Uterus (tissue), 4 donors: ENCODE measurements at regions of chr3 and their contacts with region 1.

Region 1: DNA sequence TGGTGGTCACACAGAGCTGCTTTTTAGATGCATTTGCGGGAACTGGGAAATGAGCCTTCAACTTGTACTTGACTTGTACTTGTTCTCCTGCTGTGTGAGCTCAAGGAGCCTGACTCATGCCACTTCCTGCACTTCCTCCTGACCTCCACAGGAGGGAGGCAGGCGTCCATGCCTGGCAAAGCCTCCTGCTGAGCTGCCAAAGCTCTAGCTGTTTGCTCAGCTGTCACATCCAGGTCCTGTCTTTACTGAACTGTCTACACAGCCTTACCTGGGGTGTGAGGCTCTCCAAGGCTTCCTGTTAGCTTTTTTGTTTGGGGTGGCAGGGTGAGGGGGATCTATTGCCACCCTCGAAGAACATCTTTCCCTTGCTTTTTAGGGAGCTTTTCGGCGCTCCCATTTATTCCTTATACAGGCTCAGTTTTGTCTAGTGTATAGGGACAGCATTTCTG is 6.4 kb downstream of the THPO start:
- DNase-seq: peak; percentile 79 to 81
- H3K4me3 ChIP-seq: no peak overlapping the region
- H3K27ac ChIP-seq: peak overlapping the region in 1 of 2 donors; percentile 8
- H3K4me1 ChIP-seq: no peaks in the 10 kb centered on the region
- H3K27me3 ChIP-seq: no peaks in the 10 kb centered on the region
- CTCF ChIP-seq: peak; percentile 88 to 96 (median 93)
- POLR2A ChIP-seq: peak in 1 of 2 donors; percentile 17

Region 2: DNA sequence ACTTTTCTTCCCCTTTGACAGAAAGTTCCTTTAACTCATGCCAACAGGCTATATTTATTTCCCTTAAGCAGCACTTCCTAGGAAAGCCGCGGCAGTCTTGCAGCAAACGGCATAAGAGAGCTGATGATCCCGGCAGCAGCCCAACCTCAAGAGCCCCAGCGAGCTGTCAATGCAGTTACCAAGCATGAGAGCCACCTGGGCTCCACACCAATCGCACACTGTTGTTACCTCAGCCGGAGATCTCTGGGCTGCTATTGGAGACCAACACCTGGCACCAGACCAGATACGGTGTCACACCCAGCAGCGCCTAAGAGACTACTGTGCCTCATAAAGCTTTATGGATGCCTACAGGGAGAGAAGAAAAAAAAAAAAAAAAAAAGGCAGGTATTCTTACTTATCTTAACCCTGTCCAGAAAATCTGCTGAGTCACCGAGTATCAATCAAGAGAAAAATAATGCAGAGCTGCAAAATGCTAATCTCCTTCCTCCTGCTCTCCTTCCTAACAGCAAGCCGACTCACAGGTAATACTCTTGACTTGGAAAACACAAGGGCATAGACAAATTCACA is 365.6 kb before region 1 on chr3:
- intact Hi-C with region 1: no loop called
- DNase-seq: peak in 1 of 2 donors; percentile 19
- H3K4me3 ChIP-seq: no peak overlapping the region
- H3K27ac ChIP-seq: no peak overlapping the region
- H3K4me1 ChIP-seq: no peaks in the 10 kb centered on the region
- H3K27me3 ChIP-seq: no peaks in the 10 kb centered on the region
- CTCF ChIP-seq: no peak
- POLR2A ChIP-seq: no peak

Region 3: GRCh38 chr3:184305577-184305976 is 66.0 kb before region 1 on chr3:
- intact Hi-C with region 1: no loop called
- DNase-seq: no peak
- H3K4me3 ChIP-seq: no peak overlapping the region
- H3K27ac ChIP-seq: no peak overlapping the region
- H3K4me1 ChIP-seq: no peaks in the 10 kb centered on the region
- H3K27me3 ChIP-seq: no peaks in the 10 kb centered on the region
- CTCF ChIP-seq: peak in 2 of 4 experiments; percentile 13 to 16
- POLR2A ChIP-seq: no peak

Region 4: GRCh38 chr3:184513276-184514170 is 141.9 kb after region 1 on chr3:
- intact Hi-C with region 1: loop called (anchors 10 kb)
- DNase-seq: peak; percentile 85 to 87
- H3K4me3 ChIP-seq: peak overlapping the region; percentile 16 to 17
- H3K27ac ChIP-seq: peak overlapping the region in 1 of 2 donors; percentile 36
- H3K4me1 ChIP-seq: no peaks in the 10 kb centered on the region
- H3K27me3 ChIP-seq: peaks cover 0 to 8% of the 10 kb centered on the region in 2 donors
- CTCF ChIP-seq: peak; percentile 78 to 91 (median 85)
- POLR2A ChIP-seq: no peak

Region 5: GRCh38 chr3:184543843-184544512 is 172.4 kb after region 1 on chr3:
- intact Hi-C with region 1: loop called (anchors 10 kb)
- DNase-seq: peak; percentile 70 to 82
- H3K4me3 ChIP-seq: no peak overlapping the region
- H3K27ac ChIP-seq: no peak overlapping the region
- H3K4me1 ChIP-seq: peaks cover 0 to 3% of the 10 kb centered on the region in 2 donors
- H3K27me3 ChIP-seq: no peaks in the 10 kb centered on the region
- CTCF ChIP-seq: peak; percentile 89 to 95 (median 90)
- POLR2A ChIP-seq: no peak

Region 6: DNA sequence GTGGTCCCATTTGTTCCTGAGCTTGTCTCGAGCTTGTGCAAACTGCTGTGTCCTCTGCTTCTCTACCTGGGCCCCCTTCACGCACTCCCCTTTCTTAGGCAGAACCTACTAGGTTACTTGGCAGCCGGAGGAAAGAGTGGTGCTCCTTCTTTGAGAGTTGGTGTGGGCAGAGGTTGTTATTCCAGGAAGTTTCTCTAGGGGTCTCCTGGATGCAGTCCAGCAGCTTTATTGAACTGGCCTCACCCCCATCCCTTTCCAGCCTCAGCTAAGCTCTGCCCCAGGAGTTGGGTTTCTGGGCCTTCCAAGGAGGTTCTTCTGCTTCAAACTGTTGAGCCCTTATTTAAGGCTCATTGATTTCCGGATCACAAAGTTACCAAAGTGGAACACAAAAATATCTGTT is 678.1 kb after region 1 on chr3:
- intact Hi-C with region 1: no loop called
- DNase-seq: no peak
- H3K4me3 ChIP-seq: no peak overlapping the region
- H3K27ac ChIP-seq: no peak overlapping the region
- H3K4me1 ChIP-seq: peaks cover 0 to 3% of the 10 kb centered on the region in 2 donors
- H3K27me3 ChIP-seq: no peaks in the 10 kb centered on the region
- CTCF ChIP-seq: no peak
- POLR2A ChIP-seq: no peak